ENCODE measurements at regions of chr11 and their contacts with region 1.

Region 1: GRCh38 chr11:119196833-119197483 is 9.2 kb upstream of the CBL start:
- DNase-seq: peak in 8 of 9 donors; percentile 51 to 84 (median 78)
- ATAC-seq: peak; percentile 98
- H3K4me3 ChIP-seq: no peak overlapping the region
- H3K4me3 Mint-ChIP-seq: no peak overlapping the region
- H3K27ac ChIP-seq: no peak overlapping the region
- H3K27ac Mint-ChIP-seq: no peak overlapping the region
- H3K4me1 ChIP-seq: no peaks in the 10 kb centered on the region
- H3K4me1 Mint-ChIP-seq: peaks cover 0 to 10% (median 5%) of the 10 kb centered on the region in 7 donors
- H3K27me3 ChIP-seq: no peaks in the 10 kb centered on the region
- H3K27me3 Mint-ChIP-seq: peaks cover 0 to 5% (median 0%) of the 10 kb centered on the region in 5 donors

Region 2: DNA sequence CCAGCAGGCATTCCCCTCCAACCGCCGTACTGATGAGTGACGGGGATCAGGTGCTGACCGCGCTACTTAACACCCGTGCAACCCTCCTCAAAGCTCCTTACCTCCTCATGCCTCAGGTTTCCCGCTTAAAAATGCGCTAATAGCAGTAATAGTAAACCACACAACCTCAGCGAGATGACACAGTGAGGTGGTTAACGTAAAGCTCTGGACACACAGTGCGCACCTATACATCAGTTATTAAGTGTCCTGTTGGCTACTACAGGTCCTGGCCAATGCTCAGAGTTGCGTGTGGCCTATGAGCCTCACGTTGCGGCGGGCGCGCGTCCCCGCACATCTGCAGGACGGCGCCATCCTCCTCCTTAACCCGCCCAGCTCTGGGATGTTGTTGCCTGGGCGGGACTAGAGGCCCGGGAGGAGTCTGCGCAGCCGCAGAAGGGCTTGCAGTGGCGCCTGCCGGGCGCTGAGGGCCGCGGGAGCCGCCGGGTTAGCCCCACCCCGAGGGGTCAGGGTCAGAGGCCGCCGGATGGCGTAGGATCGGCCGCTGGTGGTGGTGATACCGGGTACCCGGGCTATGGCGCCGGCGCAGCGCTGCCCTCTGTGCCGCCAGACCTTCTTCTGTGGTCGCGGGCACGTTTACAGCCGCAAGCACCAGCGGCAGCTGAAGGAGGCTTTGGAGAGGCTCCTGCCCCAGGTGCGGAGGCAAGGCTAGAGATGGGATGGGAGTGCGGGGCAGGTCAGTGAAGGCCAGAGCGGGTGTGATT is 199.2 kb before region 1 on chr11 and contains the start of gene CENATAC:
- CTCF ChIA-PET with region 1: interaction called, 3 read pairs
- POLR2A ChIA-PET with region 1: no interaction called
- intact Hi-C with region 1: loop called in 1 of 2 experiments (anchors 1 kb)
- DNase-seq: peak; percentile 91 to 98 (median 94)
- ATAC-seq: peak; percentile 98
- H3K4me3 ChIP-seq: peak within 1 kb of the TSS; percentile 91
- H3K4me3 Mint-ChIP-seq: peak within 1 kb of the TSS; percentile 87 to 99 (median 94)
- H3K27ac ChIP-seq: peak within 1 kb of the TSS; percentile 85
- H3K27ac Mint-ChIP-seq: peak within 1 kb of the TSS; percentile 87 to 98 (median 92)
- H3K4me1 ChIP-seq: peaks cover 6 to 16% of the 10 kb centered on the region in 2 donors
- H3K4me1 Mint-ChIP-seq: peaks cover 26 to 45% (median 37%) of the 10 kb centered on the region in 7 donors
- H3K27me3 ChIP-seq: no peaks in the 10 kb centered on the region
- H3K27me3 Mint-ChIP-seq: no peaks in the 10 kb centered on the region
- total RNA-seq, gene CENATAC: 53.5 to 136 (median 109) TPM

Region 3: GRCh38 chr11:119057000-119057769 is 139.8 kb before region 1 on chr11 and contains the start of gene HYOU1:
- CTCF ChIA-PET with region 1: no interaction called
- POLR2A ChIA-PET with region 1: no interaction called
- intact Hi-C with region 1: loop called (anchors 2 kb)
- DNase-seq: peak; percentile 97 to 98 (median 98)
- ATAC-seq: peak; percentile 98
- H3K4me3 ChIP-seq: peak within 1 kb of the TSS; percentile 73
- H3K4me3 Mint-ChIP-seq: peak within 1 kb of the TSS; percentile 90 to 99 (median 95)
- H3K27ac ChIP-seq: peak within 1 kb of the TSS; percentile 96
- H3K27ac Mint-ChIP-seq: peak within 1 kb of the TSS; percentile 86 to 99 (median 95)
- H3K4me1 ChIP-seq: peaks cover 18 to 20% of the 10 kb centered on the region in 2 donors
- H3K4me1 Mint-ChIP-seq: peaks cover 22 to 44% (median 35%) of the 10 kb centered on the region in 7 donors
- H3K27me3 ChIP-seq: no peaks in the 10 kb centered on the region
- H3K27me3 Mint-ChIP-seq: no peaks in the 10 kb centered on the region
- total RNA-seq, gene HYOU1: 77.8 to 198 (median 110) TPM

Region 4: GRCh38 chr11:119144825-119145486 is 52.0 kb before region 1 on chr11:
- CTCF ChIA-PET with region 1: no interaction called
- POLR2A ChIA-PET with region 1: interaction called, 5 read pairs
- intact Hi-C with region 1: loop called (anchors 2 to 5 kb)
- DNase-seq: no peak
- ATAC-seq: peak; percentile 80
- H3K4me3 ChIP-seq: no peak overlapping the region
- H3K4me3 Mint-ChIP-seq: no peak overlapping the region
- H3K27ac ChIP-seq: no peak overlapping the region
- H3K27ac Mint-ChIP-seq: peak overlapping the region in 1 of 9 donors; percentile 59
- H3K4me1 ChIP-seq: peaks cover 0 to 11% of the 10 kb centered on the region in 2 donors
- H3K4me1 Mint-ChIP-seq: peaks cover 5 to 18% (median 13%) of the 10 kb centered on the region in 7 donors
- H3K27me3 ChIP-seq: no peaks in the 10 kb centered on the region
- H3K27me3 Mint-ChIP-seq: peaks cover 31 to 51% (median 36%) of the 10 kb centered on the region in 5 donors

Region 5: GRCh38 chr11:119168471-119169281 is 28.3 kb before region 1 on chr11 and contains the start of gene NLRX1:
- CTCF ChIA-PET with region 1: interaction called, 6 read pairs
- POLR2A ChIA-PET with region 1: interaction called, 3 read pairs
- intact Hi-C with region 1: loop called (anchors 1 kb)
- DNase-seq: peak; percentile 67 to 85 (median 82)
- ATAC-seq: peak; percentile 98
- H3K4me3 ChIP-seq: peak within 1 kb of the TSS; percentile 75
- H3K4me3 Mint-ChIP-seq: peak within 1 kb of the TSS; percentile 86 to 94 (median 90)
- H3K27ac ChIP-seq: peak within 1 kb of the TSS; percentile 73
- H3K27ac Mint-ChIP-seq: peak within 1 kb of the TSS; percentile 64 to 95 (median 87)
- H3K4me1 ChIP-seq: peaks cover 0 to 4% of the 10 kb centered on the region in 2 donors
- H3K4me1 Mint-ChIP-seq: peaks cover 4 to 25% (median 11%) of the 10 kb centered on the region in 7 donors
- H3K27me3 ChIP-seq: no peaks in the 10 kb centered on the region
- H3K27me3 Mint-ChIP-seq: no peaks in the 10 kb centered on the region
- total RNA-seq, gene NLRX1: 8.3 to 19.5 (median 9.8) TPM

Region 6: GRCh38 chr11:119284344-119285157 is 87.6 kb after region 1 on chr11:
- CTCF ChIA-PET with region 1: interaction called, 8 read pairs
- POLR2A ChIA-PET with region 1: no interaction called
- intact Hi-C with region 1: loop called in 1 of 2 experiments (anchors 2 kb)
- DNase-seq: peak in 7 of 9 donors; percentile 56 to 76 (median 68)
- ATAC-seq: peak; percentile 94
- H3K4me3 ChIP-seq: no peak overlapping the region
- H3K4me3 Mint-ChIP-seq: peak overlapping the region in 2 of 10 donors; percentile 23 to 51
- H3K27ac ChIP-seq: no peak overlapping the region
- H3K27ac Mint-ChIP-seq: peak overlapping the region; percentile 24 to 91 (median 55)
- H3K4me1 ChIP-seq: peaks cover 0 to 6% of the 10 kb centered on the region in 2 donors
- H3K4me1 Mint-ChIP-seq: peaks cover 17 to 56% (median 41%) of the 10 kb centered on the region in 7 donors
- H3K27me3 ChIP-seq: no peaks in the 10 kb centered on the region
- H3K27me3 Mint-ChIP-seq: no peaks in the 10 kb centered on the region